Astrocyte of the cerebellum (primary cell): ENCODE measurements at regions of chr9 and their contacts with region 1.

Region 1: DNA sequence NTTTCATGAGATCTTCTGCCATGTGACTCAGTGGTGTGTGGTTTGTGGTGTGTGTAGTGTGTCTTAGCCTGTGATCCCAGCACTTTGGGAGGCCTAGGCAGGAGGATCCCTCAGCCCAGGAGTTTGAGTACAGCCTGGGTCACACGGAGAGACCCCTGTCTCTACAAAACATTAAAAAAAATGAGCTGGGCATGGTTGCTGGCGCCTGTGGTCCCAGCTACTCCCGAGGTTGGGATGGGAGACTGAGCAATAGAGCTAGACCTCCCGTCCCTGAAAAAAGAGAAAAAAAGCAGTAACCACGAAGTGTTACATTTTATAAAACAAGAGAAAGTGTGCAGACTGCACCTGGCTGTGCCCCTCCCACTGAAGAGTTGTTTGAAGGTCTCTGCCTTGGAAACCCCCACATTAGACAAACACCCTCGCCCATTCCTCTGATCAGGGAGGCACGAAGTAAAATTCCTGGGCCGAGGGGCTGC is 21.2 kb upstream of the RNU6ATAC start:
- DNase-seq: no peak
- H3K4me3 ChIP-seq: no peak overlapping the region
- CTCF ChIP-seq: no peak

Region 2: DNA sequence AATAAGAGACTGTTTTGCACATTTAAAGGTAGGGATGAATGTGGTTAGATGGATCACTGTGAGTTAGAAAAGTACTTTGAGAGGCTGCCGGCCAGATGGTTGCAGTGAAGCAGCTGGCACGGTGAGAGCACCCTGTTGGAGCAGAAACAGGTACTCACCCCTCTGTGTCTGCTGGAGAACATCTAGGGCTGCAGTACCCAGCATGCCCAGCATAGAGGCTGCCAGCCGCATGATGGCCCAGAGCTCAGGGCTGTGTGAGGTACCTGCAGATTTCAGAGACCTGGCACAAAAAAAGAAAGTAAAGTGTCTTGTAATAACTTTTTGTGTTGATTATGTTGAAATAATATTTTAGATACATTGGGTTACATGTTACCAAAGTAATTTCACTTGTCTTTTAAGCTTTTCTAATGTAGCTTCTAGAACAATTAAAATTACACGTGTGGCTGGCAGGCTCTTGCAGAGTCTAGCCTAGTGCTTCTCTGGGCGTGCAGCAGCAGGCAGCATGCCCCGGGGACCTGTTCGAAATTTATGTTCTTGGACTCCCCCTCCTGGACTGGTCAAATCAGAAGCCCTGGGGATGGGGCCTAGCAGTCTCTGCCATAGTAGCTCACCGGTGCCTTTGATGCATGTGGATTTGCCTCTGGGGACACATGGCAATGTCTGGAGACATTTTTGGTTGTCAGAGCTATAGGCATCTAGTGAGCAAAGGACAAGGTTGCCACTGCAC is 38.6 kb before region 1 on chr9:
- in situ Hi-C with region 1: no loop called
- DNase-seq: no peak
- H3K4me3 ChIP-seq: no peak overlapping the region
- CTCF ChIP-seq: no peak

Region 3: GRCh38 chr9:134231330-134231745 is 45.8 kb after region 1 on chr9:
- in situ Hi-C with region 1: loop called (anchors 5 kb)
- DNase-seq: no peak
- H3K4me3 ChIP-seq: no peak overlapping the region
- CTCF ChIP-seq: no peak